ENCODE measurements at regions of chr10 and their contacts with region 1.

Region 1: DNA sequence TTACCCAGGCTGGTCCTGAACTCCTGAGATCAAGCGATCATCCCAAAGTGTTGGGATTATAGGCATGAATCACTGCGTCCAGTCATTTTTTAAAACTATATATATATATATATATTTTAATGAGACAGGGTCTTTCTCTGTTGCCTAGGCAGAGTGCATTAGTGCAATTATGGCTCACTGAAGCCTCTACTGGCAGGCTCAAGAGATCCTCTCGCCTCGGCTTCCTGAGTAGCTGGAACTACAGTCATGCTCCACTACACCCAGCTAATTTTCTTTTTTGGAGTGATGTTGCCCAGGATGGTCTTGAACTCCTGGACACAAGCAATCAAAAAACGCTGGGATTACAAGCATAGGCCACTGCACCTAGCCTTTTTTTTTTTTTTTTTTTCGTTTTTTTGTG is 55.3 kb upstream of the KAT6B start:
- DNase-seq: no peak
- H3K4me3 ChIP-seq: no peak overlapping the region
- H3K4me3 Mint-ChIP-seq: no peak overlapping the region
- H3K27ac Mint-ChIP-seq: no peak overlapping the region
- H3K4me1 ChIP-seq: no peaks in the 10 kb centered on the region
- H3K4me1 Mint-ChIP-seq: no peaks in the 10 kb centered on the region
- H3K27me3 ChIP-seq: no peaks in the 10 kb centered on the region; the same call in 1 of the 2 replicates
- H3K27me3 Mint-ChIP-seq: no peaks in the 10 kb centered on the region
- CTCF ChIP-seq: no peak

Region 2: GRCh38 chr10:74275755-74276290 is 495.2 kb before region 1 on chr10:
- CTCF ChIA-PET with region 1: interaction called, 10 read pairs
- POLR2A ChIA-PET with region 1: no interaction called
- intact Hi-C with region 1: no loop called
- DNase-seq: no peak
- H3K4me3 ChIP-seq: no peak overlapping the region
- H3K4me3 Mint-ChIP-seq: no peak overlapping the region
- H3K27ac Mint-ChIP-seq: peak overlapping the region; percentile 35
- H3K4me1 ChIP-seq: peaks cover 11% of the 10 kb centered on the region; the same call in 1 of the 2 replicates
- H3K4me1 Mint-ChIP-seq: peaks cover 13% of the 10 kb centered on the region
- H3K27me3 ChIP-seq: no peaks in the 10 kb centered on the region
- H3K27me3 Mint-ChIP-seq: no peaks in the 10 kb centered on the region
- CTCF ChIP-seq: no peak

Region 3: DNA sequence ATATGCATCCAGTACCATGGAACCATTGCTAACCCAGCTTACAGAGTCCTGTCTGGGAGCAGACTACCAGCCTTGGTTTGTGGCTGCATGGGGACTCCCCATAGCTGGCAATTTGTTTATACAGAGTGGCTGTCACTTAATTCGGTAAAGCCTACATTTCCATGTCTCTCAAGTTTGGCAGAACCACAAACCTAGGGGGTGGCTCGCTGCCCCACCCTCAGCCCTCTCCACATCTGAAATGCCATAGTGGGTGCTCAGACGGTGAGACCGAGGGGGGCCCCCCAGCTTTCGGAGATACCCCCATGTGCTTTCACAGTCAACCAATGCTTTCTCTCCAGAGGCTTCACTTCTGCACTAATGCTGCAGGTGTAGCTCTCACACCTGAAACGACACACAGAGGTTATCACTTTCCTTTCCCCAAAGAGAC is 20.2 kb before region 1 on chr10:
- CTCF ChIA-PET with region 1: no interaction called
- POLR2A ChIA-PET with region 1: no interaction called
- intact Hi-C with region 1: no loop called
- DNase-seq: no peak
- H3K4me3 ChIP-seq: no peak overlapping the region
- H3K4me3 Mint-ChIP-seq: no peak overlapping the region
- H3K27ac Mint-ChIP-seq: no peak overlapping the region
- H3K4me1 ChIP-seq: no peaks in the 10 kb centered on the region; the same call in 1 of the 2 replicates
- H3K4me1 Mint-ChIP-seq: no peaks in the 10 kb centered on the region
- H3K27me3 ChIP-seq: no peaks in the 10 kb centered on the region
- H3K27me3 Mint-ChIP-seq: no peaks in the 10 kb centered on the region
- CTCF ChIP-seq: no peak